ENCODE measurements at regions of chr19 and their contacts with region 1.

Region 1: DNA sequence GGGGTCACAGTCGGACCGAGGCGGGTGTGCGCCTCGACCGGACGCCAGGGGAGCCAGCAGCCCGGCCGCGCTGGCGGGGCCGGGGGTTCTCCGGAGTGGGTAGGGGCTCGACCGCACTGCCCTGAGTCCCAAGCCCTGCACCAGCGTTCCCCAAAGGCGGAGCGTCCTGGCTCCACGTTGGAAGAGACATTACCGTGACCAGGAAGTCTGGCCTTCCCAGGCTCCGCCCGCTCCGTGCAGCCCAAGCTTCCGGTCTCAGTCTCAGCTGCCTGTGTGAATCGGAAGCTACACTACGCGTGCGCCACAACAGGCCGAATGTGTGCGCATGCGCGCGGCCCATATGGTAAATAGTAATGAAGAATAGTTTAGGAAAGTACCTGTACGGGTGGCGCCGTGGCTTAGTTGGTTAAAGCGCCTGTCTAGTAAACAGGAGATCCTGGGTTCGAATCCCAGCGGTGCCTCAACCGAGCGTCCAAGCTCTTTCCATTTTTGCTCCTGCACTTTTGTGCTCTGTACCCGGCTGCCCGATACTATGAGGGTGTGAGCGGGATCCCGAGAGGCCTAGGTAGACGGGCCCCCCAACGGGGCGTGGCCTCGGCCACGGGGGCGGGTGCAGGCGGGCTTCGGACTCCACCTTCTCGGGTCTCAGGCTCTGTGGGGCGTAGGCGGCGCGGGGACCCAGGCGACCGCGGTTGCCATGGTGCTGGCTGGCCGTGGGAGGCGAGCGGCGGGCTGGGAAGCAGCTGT is 17.3 kb upstream of the LRP3 start:
- DNase-seq: peak; percentile 98
- H3K4me3 ChIP-seq: peak overlapping the region; percentile 82
- H3K27ac ChIP-seq: peak overlapping the region; percentile 68
- H3K27me3 ChIP-seq: peaks cover 3% of the 10 kb centered on the region
- CTCF ChIP-seq: peak; percentile 25; the same call in 1 of the 2 replicates

Region 2: GRCh38 chr19:33143897-33144405 is 32.9 kb before region 1 on chr19:
- CTCF ChIA-PET with region 1: interaction called, 29 read pairs
- POLR2A ChIA-PET with region 1: no interaction called
- DNase-seq: peak; percentile 6
- H3K4me3 ChIP-seq: no peak overlapping the region
- H3K27ac ChIP-seq: no peak overlapping the region
- H3K27me3 ChIP-seq: peaks cover 7% of the 10 kb centered on the region
- CTCF ChIP-seq: peak; percentile 96

Region 3: GRCh38 chr19:33156334-33156733 is 20.5 kb before region 1 on chr19:
- CTCF ChIA-PET with region 1: interaction called, 12 read pairs
- POLR2A ChIA-PET with region 1: interaction called, 12 read pairs
- DNase-seq: no peak
- H3K4me3 ChIP-seq: no peak overlapping the region
- H3K27ac ChIP-seq: no peak overlapping the region
- H3K27me3 ChIP-seq: no peaks in the 10 kb centered on the region
- CTCF ChIP-seq: no peak

Region 4: GRCh38 chr19:33226550-33227241 is 49.9 kb after region 1 on chr19:
- CTCF ChIA-PET with region 1: no interaction called
- POLR2A ChIA-PET with region 1: no interaction called
- DNase-seq: no peak
- H3K4me3 ChIP-seq: no peak overlapping the region
- H3K27ac ChIP-seq: no peak overlapping the region
- H3K27me3 ChIP-seq: peaks cover 50% of the 10 kb centered on the region
- CTCF ChIP-seq: no peak